ENCODE measurements at regions of chr1 and their contacts with region 1.

Region 1: GRCh38 chr1:234823191-234824176 is 213.5 kb upstream of the IRF2BP2 start:
- DNase-seq: no peak
- H3K4me3 ChIP-seq: no peak overlapping the region
- H3K27ac ChIP-seq: no peak overlapping the region
- H3K4me1 ChIP-seq: peaks cover 0 to 9% (median 0%) of the 10 kb centered on the region in 4 donors
- H3K27me3 ChIP-seq: no peaks in the 10 kb centered on the region
- CTCF ChIP-seq: no peak
- EP300 ChIP-seq: no peak
- POLR2A ChIP-seq: no peak

Region 2: GRCh38 chr1:234851450-234852438 is 28.3 kb after region 1 on chr1:
- intact Hi-C with region 1: no loop called
- DNase-seq: no peak
- H3K4me3 ChIP-seq: no peak overlapping the region
- H3K27ac ChIP-seq: no peak overlapping the region
- H3K4me1 ChIP-seq: peaks cover 0 to 17% (median 5%) of the 10 kb centered on the region in 4 donors
- H3K27me3 ChIP-seq: no peaks in the 10 kb centered on the region
- CTCF ChIP-seq: no peak
- EP300 ChIP-seq: no peak
- POLR2A ChIP-seq: no peak

Region 3: DNA sequence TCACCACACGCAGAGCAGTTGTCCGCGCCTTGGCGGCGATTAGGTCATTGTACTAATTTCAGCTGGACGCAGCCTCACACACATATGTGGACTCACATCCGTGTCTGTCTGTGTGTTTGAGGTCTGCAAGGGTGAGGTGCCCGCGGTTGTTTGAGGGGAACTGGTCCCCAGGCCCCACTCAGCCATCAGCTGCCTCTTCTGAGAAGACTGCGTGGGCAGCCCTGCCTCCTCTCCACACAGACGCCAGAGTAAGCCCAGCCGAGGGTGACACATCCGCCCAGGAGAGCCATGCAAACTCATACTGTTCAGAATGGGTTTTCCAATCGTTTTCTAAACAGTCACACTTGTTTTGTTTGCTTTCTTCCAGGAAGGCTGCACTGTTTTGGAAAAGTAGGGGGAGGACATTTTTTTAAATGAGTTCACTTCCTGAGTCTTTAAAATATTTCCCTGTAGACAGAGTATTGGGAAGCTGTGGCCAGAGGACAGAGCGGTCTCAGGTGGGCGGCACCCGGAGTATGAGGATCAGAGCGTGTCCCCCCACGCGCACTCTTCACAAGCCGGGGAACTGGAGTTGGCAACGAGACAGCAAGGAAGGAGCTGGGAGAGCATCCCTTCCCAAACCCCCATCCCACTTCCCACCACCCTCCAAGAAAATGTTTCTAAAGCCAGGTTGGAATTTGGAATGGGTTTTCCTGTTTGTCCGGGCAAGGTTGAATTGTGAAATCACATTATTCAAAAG is 251.9 kb after region 1 on chr1:
- intact Hi-C with region 1: loop called (anchors 10 kb)
- DNase-seq: peak; percentile 81
- H3K4me3 ChIP-seq: no peak overlapping the region
- H3K27ac ChIP-seq: peak overlapping the region; percentile 69 to 89 (median 82)
- H3K4me1 ChIP-seq: peaks cover 0 to 39% (median 35%) of the 10 kb centered on the region in 4 donors
- H3K27me3 ChIP-seq: no peaks in the 10 kb centered on the region
- CTCF ChIP-seq: no peak
- EP300 ChIP-seq: peak in 2 of 4 donors; percentile 39 to 40
- POLR2A ChIP-seq: no peak